CD4-positive, alpha-beta T cell (primary cell): ENCODE measurements at regions of chr2 and their contacts with region 1.

Region 1: DNA sequence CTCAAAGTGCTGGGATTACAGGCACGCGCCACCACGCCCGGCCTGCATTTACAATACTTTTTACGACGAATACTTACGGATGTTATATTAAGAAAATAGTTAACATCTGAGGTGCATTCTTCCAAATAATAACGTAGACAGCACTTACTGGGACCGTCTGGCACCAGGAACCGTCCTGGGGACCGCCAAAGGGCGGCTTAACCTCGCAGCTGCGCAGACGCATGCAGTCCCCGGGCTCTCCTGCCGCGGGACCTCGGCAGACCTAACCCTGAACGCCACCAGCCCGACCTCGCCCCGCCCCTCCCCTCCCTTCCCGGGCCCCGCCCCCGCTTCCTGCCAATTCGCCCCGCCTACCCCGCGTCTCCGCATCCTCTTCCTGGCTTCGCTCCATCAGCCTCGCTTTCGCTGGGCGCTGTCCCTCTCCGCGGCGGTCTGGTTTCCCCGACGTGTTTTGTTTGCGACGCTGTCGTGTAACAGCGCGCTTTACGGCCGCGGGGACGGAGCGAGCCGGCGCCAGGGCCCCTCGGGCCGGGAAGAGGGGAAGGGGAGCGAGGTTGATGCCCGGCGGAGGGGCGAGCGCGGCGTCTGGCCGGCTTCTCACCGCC is at the start of gene CNOT11:
- DNase-seq: peak; percentile 98 to 100 (median 99)
- ATAC-seq: peak; percentile 77
- H3K4me3 ChIP-seq: peak within 1 kb of the TSS; percentile 90
- H3K4me3 Mint-ChIP-seq: peak within 1 kb of the TSS; percentile 97
- H3K27ac ChIP-seq: peak within 1 kb of the TSS; percentile 92 to 98
- H3K27ac Mint-ChIP-seq: peak within 1 kb of the TSS; percentile 93
- H3K4me1 ChIP-seq: peaks cover 50% of the 10 kb centered on the region
- H3K4me1 Mint-ChIP-seq: peaks cover 55% of the 10 kb centered on the region
- H3K27me3 ChIP-seq: no peaks in the 10 kb centered on the region
- H3K27me3 Mint-ChIP-seq: no peaks in the 10 kb centered on the region
- CTCF ChIP-seq: peak; percentile 2
- total RNA-seq, gene CNOT11: 39.4 to 46.8 TPM

Region 2: GRCh38 chr2:100562732-100563720 is 689.5 kb before region 1 on chr2 and contains the start of gene PDCL3:
- CTCF ChIA-PET with region 1: no interaction called
- POLR2A ChIA-PET with region 1: interaction called, 5 read pairs
- intact Hi-C with region 1: loop called in 1 of 2 experiments (anchors 5 kb)
- DNase-seq: peak; percentile 88 to 98 (median 94)
- ATAC-seq: peak; percentile 88
- H3K4me3 ChIP-seq: peak within 1 kb of the TSS; percentile 89
- H3K4me3 Mint-ChIP-seq: peak within 1 kb of the TSS; percentile 94
- H3K27ac ChIP-seq: peak within 1 kb of the TSS; percentile 74 to 78
- H3K27ac Mint-ChIP-seq: peak within 1 kb of the TSS; percentile 97
- H3K4me1 ChIP-seq: peaks cover 40% of the 10 kb centered on the region
- H3K4me1 Mint-ChIP-seq: peaks cover 46% of the 10 kb centered on the region
- H3K27me3 ChIP-seq: no peaks in the 10 kb centered on the region
- H3K27me3 Mint-ChIP-seq: no peaks in the 10 kb centered on the region
- CTCF ChIP-seq: no peak
- total RNA-seq, gene PDCL3: 31.7 to 34.6 TPM

Region 3: DNA sequence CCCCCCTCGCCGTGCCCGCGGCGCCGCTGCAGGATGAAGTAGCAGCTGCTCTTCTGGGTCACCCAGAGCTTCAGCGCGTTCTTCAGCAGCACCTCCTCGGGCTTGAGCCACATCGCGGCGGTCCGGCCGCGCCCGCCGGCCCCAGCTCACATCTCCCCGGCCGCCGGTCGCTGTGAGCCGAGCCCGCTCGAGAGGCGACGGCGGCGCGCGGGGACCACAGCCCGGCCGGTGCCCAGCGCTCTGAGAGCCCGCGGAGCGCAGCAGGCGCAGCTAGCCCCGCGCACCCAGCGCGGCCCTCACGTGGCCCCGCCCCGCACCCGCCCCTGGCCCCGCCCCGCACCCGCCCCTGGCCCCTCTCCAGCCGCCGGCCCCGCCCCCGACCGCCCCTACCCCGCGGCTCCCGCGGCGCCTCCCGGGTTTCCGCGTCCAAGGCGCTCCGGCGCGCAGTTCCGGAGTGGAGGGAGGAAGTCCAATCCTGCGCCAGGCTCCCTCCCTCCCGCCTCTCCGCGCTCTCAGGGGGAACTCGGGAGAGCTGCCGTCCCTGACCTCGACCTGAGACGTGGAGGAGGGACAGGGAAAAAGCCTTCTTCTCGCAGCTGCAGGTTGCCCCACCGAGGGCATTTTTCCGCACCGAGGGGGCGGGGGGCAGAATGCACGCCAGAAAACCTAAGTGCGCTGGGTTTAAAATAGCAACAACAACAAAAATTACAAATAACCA is 101.2 kb before region 1 on chr2 and contains the start of gene TBC1D8:
- CTCF ChIA-PET with region 1: no interaction called
- POLR2A ChIA-PET with region 1: interaction called, 15 read pairs
- intact Hi-C with region 1: loop called in 1 of 2 experiments (anchors 2 kb)
- DNase-seq: peak; percentile 27 to 84 (median 52)
- ATAC-seq: peak; percentile 86
- H3K4me3 ChIP-seq: peak within 1 kb of the TSS; percentile 72
- H3K4me3 Mint-ChIP-seq: peak within 1 kb of the TSS; percentile 89
- H3K27ac ChIP-seq: no peak within 1 kb of the TSS
- H3K27ac Mint-ChIP-seq: peak within 1 kb of the TSS; percentile 26
- H3K4me1 ChIP-seq: peaks cover 28% of the 10 kb centered on the region
- H3K4me1 Mint-ChIP-seq: peaks cover 34% of the 10 kb centered on the region
- H3K27me3 ChIP-seq: peaks cover 0 to 5% of the 10 kb centered on the region in 2 experiments
- H3K27me3 Mint-ChIP-seq: peaks cover 23% of the 10 kb centered on the region
- CTCF ChIP-seq: no peak
- total RNA-seq, gene TBC1D8: 1.0 to 1.8 TPM

Region 4: GRCh38 chr2:101272045-101272784 is 19.7 kb after region 1 on chr2:
- CTCF ChIA-PET with region 1: interaction called, 5 read pairs
- POLR2A ChIA-PET with region 1: interaction called, 21 read pairs
- intact Hi-C with region 1: no loop called
- DNase-seq: peak in 1 of 14 experiments; percentile 37
- ATAC-seq: peak; percentile 32
- H3K4me3 ChIP-seq: no peak overlapping the region
- H3K4me3 Mint-ChIP-seq: no peak overlapping the region
- H3K27ac ChIP-seq: peak overlapping the region in 1 of 2 donors; percentile 25
- H3K27ac Mint-ChIP-seq: peak overlapping the region; percentile 79
- H3K4me1 ChIP-seq: peaks cover 9% of the 10 kb centered on the region
- H3K4me1 Mint-ChIP-seq: peaks cover 55% of the 10 kb centered on the region
- H3K27me3 ChIP-seq: no peaks in the 10 kb centered on the region
- H3K27me3 Mint-ChIP-seq: no peaks in the 10 kb centered on the region
- CTCF ChIP-seq: no peak

Region 5: GRCh38 chr2:101328474-101329007 is 76.0 kb after region 1 on chr2:
- CTCF ChIA-PET with region 1: interaction called, 3 read pairs
- POLR2A ChIA-PET with region 1: interaction called, 17 read pairs
- intact Hi-C with region 1: no loop called
- DNase-seq: peak in 6 of 14 experiments; percentile 24 to 94 (median 64)
- ATAC-seq: peak; percentile 85
- H3K4me3 ChIP-seq: peak overlapping the region; percentile 0
- H3K4me3 Mint-ChIP-seq: no peak overlapping the region
- H3K27ac ChIP-seq: peak overlapping the region; percentile 51 to 67
- H3K27ac Mint-ChIP-seq: no peak overlapping the region
- H3K4me1 ChIP-seq: peaks cover 60% of the 10 kb centered on the region
- H3K4me1 Mint-ChIP-seq: peaks cover 22% of the 10 kb centered on the region
- H3K27me3 ChIP-seq: no peaks in the 10 kb centered on the region
- H3K27me3 Mint-ChIP-seq: no peaks in the 10 kb centered on the region
- CTCF ChIP-seq: no peak